Right lobe of liver (tissue), 6 donors: ENCODE measurements at regions of chr13 and their contacts with region 1.

Region 1: GRCh38 chr13:99176309-99177276 is 24.1 kb upstream of the UBAC2 start:
- DNase-seq: peak; percentile 66 to 77 (median 73)
- ATAC-seq: peak; percentile 98 to 99 (median 98)
- H3K4me3 ChIP-seq: no peak overlapping the region
- H3K27ac ChIP-seq: no peak overlapping the region
- H3K4me1 ChIP-seq: no peaks in the 10 kb centered on the region
- H3K27me3 ChIP-seq: no peaks in the 10 kb centered on the region
- CTCF ChIP-seq: peak; percentile 90 to 94 (median 92)
- POLR2A ChIP-seq: no peak

Region 2: DNA sequence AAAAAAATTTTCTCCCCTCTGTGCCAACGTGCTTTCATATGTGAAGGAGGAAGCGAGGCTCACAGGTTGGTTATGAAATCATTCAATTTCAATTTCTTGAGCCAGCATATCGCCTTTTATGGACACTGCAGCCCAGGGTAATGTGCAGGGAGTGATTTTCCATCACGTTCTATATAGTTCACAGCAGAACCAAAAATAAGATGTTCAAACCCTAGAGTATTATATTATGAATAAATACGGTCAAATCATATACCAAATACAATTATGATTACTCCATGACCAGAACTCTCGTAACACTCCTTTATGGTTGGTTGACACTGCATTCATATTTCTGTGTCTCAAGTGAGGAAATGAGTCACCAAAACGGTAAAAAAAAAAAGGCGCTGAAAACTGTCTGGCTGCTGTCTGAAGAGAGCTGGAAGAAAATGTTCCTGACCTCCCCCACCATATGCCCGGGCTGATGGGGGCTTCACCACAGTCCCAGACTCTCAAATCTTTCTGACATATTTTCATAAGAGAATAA is 51.7 kb before region 1 on chr13:
- intact Hi-C with region 1: no loop called
- DNase-seq: no peak
- ATAC-seq: peak in 1 of 4 donors; percentile 43
- H3K4me3 ChIP-seq: no peak overlapping the region
- H3K27ac ChIP-seq: no peak overlapping the region
- H3K4me1 ChIP-seq: no peaks in the 10 kb centered on the region
- H3K27me3 ChIP-seq: no peaks in the 10 kb centered on the region
- CTCF ChIP-seq: no peak
- POLR2A ChIP-seq: no peak

Region 3: DNA sequence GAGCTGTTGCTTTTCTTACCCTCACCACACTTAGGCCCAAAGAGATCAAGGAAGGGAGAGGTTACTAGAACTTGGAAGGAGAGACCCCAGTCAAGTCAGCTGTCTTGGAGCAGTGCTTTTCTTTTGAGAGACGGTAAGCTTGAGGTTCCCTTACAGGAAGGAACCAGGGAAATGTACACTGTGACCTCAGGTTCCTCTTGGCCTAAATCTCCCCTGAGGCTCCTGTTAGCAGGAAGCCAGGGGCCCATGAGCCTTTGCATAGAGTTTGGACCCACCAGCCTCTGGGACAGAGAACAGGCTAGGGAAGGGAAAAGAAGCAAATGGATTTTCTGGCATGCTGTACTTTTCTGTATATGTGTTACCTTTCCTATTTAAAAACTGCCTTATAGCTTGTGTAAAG is 87.5 kb after region 1 on chr13:
- intact Hi-C with region 1: loop called (anchors 5 kb)
- DNase-seq: no peak
- ATAC-seq: peak; percentile 34 to 69 (median 48)
- H3K4me3 ChIP-seq: no peak overlapping the region
- H3K27ac ChIP-seq: no peak overlapping the region
- H3K4me1 ChIP-seq: peaks cover 0 to 10% (median 0%) of the 10 kb centered on the region in 4 donors
- H3K27me3 ChIP-seq: no peaks in the 10 kb centered on the region
- CTCF ChIP-seq: no peak
- POLR2A ChIP-seq: no peak

Region 4: DNA sequence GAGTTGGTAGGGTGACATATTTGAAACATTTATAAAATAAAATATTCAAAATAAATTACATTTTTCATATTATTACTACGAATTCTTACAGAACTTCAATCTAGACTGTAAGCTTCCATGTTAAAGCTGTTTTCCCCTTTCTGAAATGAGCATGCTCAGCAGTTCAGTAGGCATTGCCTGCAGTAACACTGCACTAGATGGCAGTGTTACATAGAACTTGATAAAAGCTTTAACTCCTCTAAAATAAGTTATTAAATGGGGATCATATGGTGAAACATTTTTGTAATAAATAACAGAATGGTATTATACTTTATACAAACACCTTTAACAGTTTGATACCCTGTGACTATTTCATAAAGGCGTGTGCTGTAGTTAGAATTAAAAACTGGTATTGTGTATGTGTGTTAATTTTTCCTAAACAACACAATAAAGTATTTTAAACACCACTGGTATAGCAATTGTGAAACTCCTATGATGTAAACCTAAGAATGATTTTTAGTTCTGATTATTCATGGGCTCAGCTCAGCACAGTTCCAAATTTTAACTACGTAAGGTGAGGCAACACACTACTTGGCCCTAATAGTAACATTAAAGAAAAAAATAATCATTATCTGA is 93.1 kb after region 1 on chr13:
- intact Hi-C with region 1: loop called (anchors 5 kb)
- DNase-seq: no peak
- ATAC-seq: peak; percentile 77 to 91 (median 87)
- H3K4me3 ChIP-seq: no peak overlapping the region
- H3K27ac ChIP-seq: no peak overlapping the region
- H3K4me1 ChIP-seq: peaks cover 0 to 4% (median 0%) of the 10 kb centered on the region in 4 donors
- H3K27me3 ChIP-seq: no peaks in the 10 kb centered on the region
- CTCF ChIP-seq: peak; percentile 72 to 87 (median 80)
- POLR2A ChIP-seq: no peak

Region 5: DNA sequence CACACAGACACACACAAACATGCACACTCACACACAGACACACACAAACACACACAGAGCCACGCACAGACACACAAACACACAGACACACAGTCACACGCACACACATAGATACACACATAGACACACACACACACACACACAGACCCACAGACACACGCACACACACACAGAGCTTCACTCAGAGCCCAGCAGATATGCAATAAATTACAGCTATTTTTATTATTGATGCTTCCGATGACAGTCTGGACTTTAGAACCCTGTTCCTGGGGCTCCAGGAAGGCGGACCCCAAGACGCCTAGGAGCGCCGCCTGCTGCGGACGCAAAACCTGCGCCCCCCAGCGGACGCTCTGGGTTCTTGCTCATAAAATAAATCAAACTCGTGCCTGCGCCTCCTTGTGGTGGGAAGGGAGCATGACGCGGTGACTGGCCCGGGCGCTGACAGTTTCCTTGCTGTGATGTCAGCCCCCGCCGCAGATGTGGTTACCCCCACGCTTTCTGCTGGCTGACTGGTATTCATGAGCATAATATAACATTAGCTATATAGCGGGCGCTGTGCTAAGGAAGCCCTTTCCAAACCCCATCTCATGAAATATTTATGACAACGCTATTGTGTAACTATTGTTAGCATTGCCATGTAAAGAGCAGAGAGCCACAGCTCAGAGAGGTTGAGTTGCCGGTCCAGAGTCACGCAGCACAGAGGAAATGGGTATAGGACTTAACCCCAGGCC is 260.3 kb after region 1 on chr13:
- intact Hi-C with region 1: loop called (anchors 5 to 10 kb)
- DNase-seq: peak; percentile 85 to 86 (median 85)
- ATAC-seq: peak; percentile 80 to 91 (median 84)
- H3K4me3 ChIP-seq: peak overlapping the region in 2 of 3 donors; percentile 14 to 26
- H3K27ac ChIP-seq: no peak overlapping the region
- H3K4me1 ChIP-seq: no peaks in the 10 kb centered on the region
- H3K27me3 ChIP-seq: no peaks in the 10 kb centered on the region
- CTCF ChIP-seq: peak; percentile 99 to 100 (median 100)
- POLR2A ChIP-seq: no peak